ENCODE measurements at regions of chr19 and their contacts with region 1.

Region 1: GRCh38 chr19:15154002-15154612 is 46.7 kb downstream of the NOTCH3 start:
- DNase-seq: no peak
- ATAC-seq: no peak
- H3K4me3 ChIP-seq: no peak overlapping the region
- H3K27ac ChIP-seq: no peak overlapping the region
- H3K4me1 ChIP-seq: peaks cover 0 to 3% (median 0%) of the 10 kb centered on the region in 9 donors
- H3K27me3 ChIP-seq: peaks cover 0 to 4% (median 0%) of the 10 kb centered on the region in 7 donors
- CTCF ChIP-seq: peak in 7 of 9 donors; percentile 41 to 59 (median 46)

Region 2: GRCh38 chr19:14871619-14872230 is 282.4 kb before region 1 on chr19:
- intact Hi-C with region 1: loop called in 1 of 10 experiments (anchors 10 kb)
- DNase-seq: no peak
- ATAC-seq: no peak
- H3K4me3 ChIP-seq: no peak overlapping the region
- H3K27ac ChIP-seq: no peak overlapping the region
- H3K4me1 ChIP-seq: no peaks in the 10 kb centered on the region
- H3K27me3 ChIP-seq: peaks cover 0 to 20% (median 7%) of the 10 kb centered on the region in 7 donors
- CTCF ChIP-seq: peak in 8 of 9 donors; percentile 19 to 54 (median 40)

Region 3: DNA sequence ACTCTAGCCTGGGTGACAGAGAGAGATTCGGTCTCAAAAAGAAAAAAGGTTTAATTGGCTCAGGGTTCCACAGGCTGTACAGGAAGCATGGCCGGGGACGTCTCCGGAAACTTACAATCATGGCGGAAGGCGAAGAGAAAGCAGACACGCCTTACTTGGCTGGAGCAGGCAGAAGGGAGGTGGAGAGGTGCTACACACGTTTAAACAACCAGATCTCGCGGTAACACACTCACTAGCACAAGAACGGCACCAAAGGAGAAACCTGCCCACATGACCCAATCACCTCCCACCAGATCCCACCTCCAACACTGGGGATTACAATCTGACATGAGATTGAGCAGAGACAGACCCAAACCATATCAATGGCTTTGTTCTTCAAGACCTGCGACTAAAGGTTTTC is 92.1 kb before region 1 on chr19:
- intact Hi-C with region 1: no loop called
- DNase-seq: no peak
- ATAC-seq: no peak
- H3K4me3 ChIP-seq: no peak overlapping the region
- H3K27ac ChIP-seq: no peak overlapping the region
- H3K4me1 ChIP-seq: no peaks in the 10 kb centered on the region
- H3K27me3 ChIP-seq: peaks cover 0 to 60% (median 17%) of the 10 kb centered on the region in 7 donors
- CTCF ChIP-seq: no peak

Region 4: GRCh38 chr19:15091901-15092753 is 62.0 kb before region 1 on chr19:
- intact Hi-C with region 1: loop called in 8 of 10 experiments (anchors 1 to 5 kb)
- DNase-seq: peak; percentile 15 to 70
- ATAC-seq: peak in 7 of 8 donors; percentile 41 to 64 (median 57)
- H3K4me3 ChIP-seq: no peak overlapping the region
- H3K27ac ChIP-seq: no peak overlapping the region
- H3K4me1 ChIP-seq: peaks cover 0 to 6% (median 0%) of the 10 kb centered on the region in 9 donors
- H3K27me3 ChIP-seq: peaks cover 0 to 20% (median 6%) of the 10 kb centered on the region in 7 donors
- CTCF ChIP-seq: peak; percentile 52 to 76 (median 72)

Region 5: GRCh38 chr19:15101479-15102082 is 52.5 kb before region 1 on chr19:
- intact Hi-C with region 1: loop called in 6 of 10 experiments (anchors 1 to 5 kb)
- DNase-seq: no peak
- ATAC-seq: peak; percentile 41 to 79 (median 62)
- H3K4me3 ChIP-seq: no peak overlapping the region
- H3K27ac ChIP-seq: peak overlapping the region in 2 of 10 donors; percentile 34 to 44
- H3K4me1 ChIP-seq: peaks cover 0 to 11% (median 0%) of the 10 kb centered on the region in 9 donors
- H3K27me3 ChIP-seq: peaks cover 0 to 8% (median 0%) of the 10 kb centered on the region in 7 donors
- CTCF ChIP-seq: peak; percentile 46 to 77 (median 75)

Region 6: GRCh38 chr19:15379083-15379995 is 225.2 kb after region 1 on chr19 and contains the start of gene AKAP8:
- intact Hi-C with region 1: no loop called
- DNase-seq: peak; percentile 98 to 99
- ATAC-seq: peak; percentile 94 to 97 (median 97)
- H3K4me3 ChIP-seq: peak within 1 kb of the TSS; percentile 58 to 99 (median 90)
- H3K27ac ChIP-seq: peak within 1 kb of the TSS; percentile 93 to 99 (median 98)
- H3K4me1 ChIP-seq: peaks cover 26 to 50% (median 47%) of the 10 kb centered on the region in 9 donors
- H3K27me3 ChIP-seq: no peaks in the 10 kb centered on the region
- CTCF ChIP-seq: no peak
- total RNA-seq, gene AKAP8: 15.7 to 32.2 (median 18.6) TPM